Aorta (tissue), 5 donors: ENCODE measurements at regions of chr22 and their contacts with region 1.

Region 1: DNA sequence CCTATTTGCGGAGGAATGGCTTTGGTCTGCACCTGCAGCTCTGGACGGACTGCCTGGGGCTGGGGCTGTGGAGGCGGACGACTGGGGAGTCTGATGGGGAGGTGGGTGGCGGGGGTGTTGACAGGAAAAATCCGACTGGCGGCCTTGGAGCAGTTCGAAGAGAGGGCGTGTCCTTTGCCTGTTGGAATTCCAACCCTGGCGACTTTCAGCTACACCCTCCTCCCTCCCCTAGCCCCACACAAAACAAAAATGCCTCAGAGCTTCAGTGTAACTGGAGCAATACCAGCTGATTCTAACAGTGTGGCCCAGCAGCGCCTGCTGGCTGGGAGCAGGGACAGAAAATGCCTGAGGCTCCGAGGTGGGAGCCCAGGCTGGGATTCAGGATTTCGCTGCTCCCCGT is 85.4 kb downstream of the ATXN10 start:
- DNase-seq: peak in 1 of 2 donors; percentile 64
- ATAC-seq: peak; percentile 73
- H3K4me3 ChIP-seq: no peak overlapping the region
- H3K27ac ChIP-seq: peak overlapping the region in 1 of 2 donors; percentile 69
- H3K4me1 ChIP-seq: peaks cover 3% of the 10 kb centered on the region in 2 donors
- H3K27me3 ChIP-seq: no peaks in the 10 kb centered on the region

Region 2: DNA sequence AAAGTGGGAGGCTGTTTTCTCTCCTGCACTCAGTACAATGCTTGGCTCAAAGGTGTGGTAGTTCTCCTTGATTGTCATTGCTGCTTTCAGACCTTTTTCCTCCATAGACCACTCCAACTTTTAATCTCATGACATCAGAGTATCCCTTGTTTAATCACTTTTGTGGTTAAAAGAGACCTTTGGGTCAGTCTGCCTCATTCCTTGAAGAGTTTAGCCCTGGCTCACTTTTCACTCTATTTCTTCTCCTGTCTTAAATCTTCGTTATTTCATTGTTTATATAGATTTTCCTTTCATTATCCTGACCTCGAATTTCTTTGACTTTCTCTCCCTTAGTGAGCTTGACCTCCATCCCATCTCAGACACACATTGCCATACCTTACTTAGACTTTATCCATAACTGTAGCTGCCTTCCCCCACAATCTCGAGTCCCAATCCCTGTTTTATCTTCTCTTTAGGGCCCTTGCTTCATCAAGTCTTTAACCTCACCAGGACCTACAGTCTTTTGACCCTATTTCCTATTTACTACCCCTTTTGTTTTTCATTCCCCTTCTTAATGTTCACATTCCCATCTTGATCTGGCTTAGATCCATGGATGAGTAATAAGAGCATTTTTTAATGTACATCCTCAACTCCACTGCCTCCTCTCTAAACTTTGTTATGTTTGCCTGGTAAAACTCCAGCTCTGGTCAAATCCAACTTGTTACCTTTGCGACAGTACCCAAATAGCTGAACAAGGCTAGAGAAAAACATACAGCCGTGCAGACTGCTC is 76.0 kb before region 1 on chr22:
- intact Hi-C with region 1: loop called in 1 of 2 experiments (anchors 5 kb)
- DNase-seq: no peak
- ATAC-seq: no peak
- H3K4me3 ChIP-seq: no peak overlapping the region
- H3K27ac ChIP-seq: no peak overlapping the region
- H3K4me1 ChIP-seq: peaks cover 4 to 9% of the 10 kb centered on the region in 2 donors
- H3K27me3 ChIP-seq: no peaks in the 10 kb centered on the region